ENCODE measurements at regions of chr17 and their contacts with region 1.

Region 1: DNA sequence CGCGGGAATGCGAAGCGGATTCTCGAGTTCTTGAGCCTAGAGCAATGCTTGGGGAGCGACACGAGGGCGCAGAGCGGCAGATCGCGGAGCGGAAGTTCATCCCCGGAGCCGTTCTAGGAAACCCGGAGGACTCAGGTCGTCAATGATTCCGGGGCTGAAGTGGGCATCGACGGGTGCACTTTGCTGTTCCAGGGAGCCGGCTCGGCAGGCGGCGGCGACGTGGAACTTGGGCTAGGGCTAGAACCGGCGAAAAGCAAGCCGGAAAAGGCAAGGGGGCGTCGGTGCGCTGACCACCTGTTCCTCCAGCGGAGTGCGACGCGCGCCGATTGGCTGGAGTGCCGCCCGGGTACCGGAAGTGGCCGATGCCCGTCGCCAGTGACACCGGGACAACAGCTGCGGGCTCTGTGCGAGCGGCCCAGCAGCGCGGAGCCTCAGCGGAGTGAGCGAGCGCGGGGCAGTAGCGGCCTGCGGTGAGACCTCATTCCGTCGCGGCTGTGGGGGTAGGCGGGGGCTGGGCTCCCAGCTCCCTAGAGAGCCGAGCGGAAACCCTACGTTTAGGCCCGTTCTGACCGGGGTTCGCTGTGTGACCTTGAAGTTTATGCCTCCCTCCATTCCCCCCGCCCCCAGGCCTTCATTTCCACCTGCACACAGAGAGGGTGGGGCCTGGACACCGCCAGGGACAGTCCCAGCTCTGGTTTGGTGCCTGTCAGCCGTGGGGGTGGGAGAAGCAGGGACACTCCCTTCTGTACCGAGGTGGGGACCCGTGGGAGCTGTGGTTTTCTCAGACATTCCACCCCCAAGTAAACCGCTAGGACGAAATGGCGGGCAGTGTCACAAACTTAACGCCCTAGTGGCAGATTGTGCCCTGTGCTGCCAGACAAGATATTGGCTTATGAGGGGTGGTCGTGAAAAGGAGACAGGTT is at the start of gene ZFP3:
- DNase-seq: peak; percentile 42 to 85 (median 65)
- ATAC-seq: peak; percentile 76
- H3K4me3 ChIP-seq: peak within 1 kb of the TSS; percentile 77
- H3K4me3 Mint-ChIP-seq: peak within 1 kb of the TSS; percentile 93
- H3K27ac ChIP-seq: peak within 1 kb of the TSS; percentile 49 to 72
- H3K27ac Mint-ChIP-seq: peak within 1 kb of the TSS; percentile 91
- H3K4me1 ChIP-seq: peaks cover 26% of the 10 kb centered on the region
- H3K4me1 Mint-ChIP-seq: peaks cover 34% of the 10 kb centered on the region
- H3K27me3 ChIP-seq: no peaks in the 10 kb centered on the region
- H3K27me3 Mint-ChIP-seq: no peaks in the 10 kb centered on the region
- CTCF ChIP-seq: no peak
- total RNA-seq, gene ZFP3: 2.4 TPM

Region 2: DNA sequence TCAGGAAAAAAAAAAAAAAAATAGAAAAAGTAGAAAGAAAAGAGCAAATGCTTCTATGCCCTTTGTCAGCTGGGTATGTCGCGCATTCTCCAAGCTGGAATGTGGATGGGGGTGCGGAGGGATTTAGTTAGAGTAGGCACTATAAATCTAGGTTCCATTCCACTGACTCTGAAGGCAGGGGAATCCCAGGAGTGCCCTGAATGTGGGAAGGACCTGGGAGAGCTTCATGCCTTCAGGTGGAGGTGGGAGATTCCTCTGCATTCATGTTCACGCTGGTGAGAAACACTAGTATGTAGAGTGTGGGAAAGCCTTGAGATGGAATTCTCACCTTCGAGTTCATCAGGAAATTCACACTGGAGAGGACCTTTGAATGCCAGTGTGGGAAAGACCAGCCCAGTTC is 20.9 kb after region 1 on chr17:
- CTCF ChIA-PET with region 1: no interaction called
- POLR2A ChIA-PET with region 1: no interaction called
- intact Hi-C with region 1: no loop called
- DNase-seq: no peak
- ATAC-seq: no peak
- H3K4me3 ChIP-seq: no peak overlapping the region
- H3K4me3 Mint-ChIP-seq: peak overlapping the region; percentile 15
- H3K27ac ChIP-seq: no peak overlapping the region
- H3K27ac Mint-ChIP-seq: no peak overlapping the region
- H3K4me1 ChIP-seq: peaks cover 12% of the 10 kb centered on the region
- H3K4me1 Mint-ChIP-seq: peaks cover 13% of the 10 kb centered on the region
- H3K27me3 ChIP-seq: peaks cover 7 to 8% of the 10 kb centered on the region in 2 experiments
- H3K27me3 Mint-ChIP-seq: no peaks in the 10 kb centered on the region
- CTCF ChIP-seq: no peak

Region 3: GRCh38 chr17:5111402-5112204 is 33.2 kb after region 1 on chr17 and contains the start of gene ZNF232:
- CTCF ChIA-PET with region 1: interaction called, 6 read pairs
- POLR2A ChIA-PET with region 1: interaction called, 8 read pairs
- intact Hi-C with region 1: loop called (anchors 2 to 5 kb)
- DNase-seq: peak; percentile 79 to 95 (median 86)
- ATAC-seq: peak; percentile 89
- H3K4me3 ChIP-seq: peak within 1 kb of the TSS; percentile 92
- H3K4me3 Mint-ChIP-seq: peak within 1 kb of the TSS; percentile 92
- H3K27ac ChIP-seq: peak within 1 kb of the TSS; percentile 16 to 61
- H3K27ac Mint-ChIP-seq: peak within 1 kb of the TSS; percentile 65
- H3K4me1 ChIP-seq: peaks cover 29% of the 10 kb centered on the region
- H3K4me1 Mint-ChIP-seq: peaks cover 49% of the 10 kb centered on the region
- H3K27me3 ChIP-seq: peaks cover 14 to 19% of the 10 kb centered on the region in 2 experiments
- H3K27me3 Mint-ChIP-seq: peaks cover 31% of the 10 kb centered on the region
- CTCF ChIP-seq: no peak
- total RNA-seq, gene ZNF232: 2.1 to 3.6 TPM

Measured in CD4-positive, alpha-beta T cell (primary cell).